Natural killer cell (primary cell): ENCODE measurements at regions of chr17 and their contacts with region 1.

Region 1: GRCh38 chr17:61412143-61412859 is 12.7 kb downstream of the TBX2 start:
- DNase-seq: peak; percentile 83 to 89
- ATAC-seq: peak; percentile 80 to 86 (median 83)
- H3K4me3 ChIP-seq: peak overlapping the region; percentile 42
- H3K4me3 Mint-ChIP-seq: peak overlapping the region; percentile 80
- H3K27ac ChIP-seq: no peak overlapping the region
- H3K27ac Mint-ChIP-seq: peak overlapping the region in 1 of 2 donors; percentile 64
- H3K4me1 ChIP-seq: peaks cover 62% of the 10 kb centered on the region
- H3K4me1 Mint-ChIP-seq: peaks cover 0 to 33% of the 10 kb centered on the region in 2 donors
- H3K27me3 ChIP-seq: peaks cover 47% of the 10 kb centered on the region
- H3K27me3 Mint-ChIP-seq: peaks cover 17 to 27% of the 10 kb centered on the region in 2 donors
- CTCF ChIP-seq: peak; percentile 98

Region 2: GRCh38 chr17:61551255-61551742 is 139.0 kb after region 1 on chr17:
- intact Hi-C with region 1: loop called (anchors 5 kb)
- DNase-seq: peak in 1 of 2 donors; percentile 33
- ATAC-seq: no peak
- H3K4me3 ChIP-seq: no peak overlapping the region
- H3K4me3 Mint-ChIP-seq: no peak overlapping the region
- H3K27ac ChIP-seq: no peak overlapping the region
- H3K27ac Mint-ChIP-seq: no peak overlapping the region
- H3K4me1 ChIP-seq: no peaks in the 10 kb centered on the region
- H3K4me1 Mint-ChIP-seq: no peaks in the 10 kb centered on the region
- H3K27me3 ChIP-seq: peaks cover 15% of the 10 kb centered on the region
- H3K27me3 Mint-ChIP-seq: peaks cover 26 to 35% of the 10 kb centered on the region in 2 donors
- CTCF ChIP-seq: no peak

Region 3: GRCh38 chr17:61583242-61583641 is 170.9 kb after region 1 on chr17:
- intact Hi-C with region 1: loop called (anchors 10 kb)
- DNase-seq: peak in 1 of 2 donors; percentile 11
- ATAC-seq: peak in 1 of 3 donors; percentile 49
- H3K4me3 ChIP-seq: no peak overlapping the region
- H3K4me3 Mint-ChIP-seq: no peak overlapping the region
- H3K27ac ChIP-seq: no peak overlapping the region
- H3K27ac Mint-ChIP-seq: no peak overlapping the region
- H3K4me1 ChIP-seq: no peaks in the 10 kb centered on the region
- H3K4me1 Mint-ChIP-seq: no peaks in the 10 kb centered on the region
- H3K27me3 ChIP-seq: peaks cover 5% of the 10 kb centered on the region
- H3K27me3 Mint-ChIP-seq: peaks cover 5 to 31% of the 10 kb centered on the region in 2 donors
- CTCF ChIP-seq: no peak

Region 4: GRCh38 chr17:61837175-61838051 is 425.1 kb after region 1 on chr17:
- intact Hi-C with region 1: loop called (anchors 1 kb)
- DNase-seq: peak; percentile 37 to 76
- ATAC-seq: peak; percentile 60 to 72 (median 68)
- H3K4me3 ChIP-seq: no peak overlapping the region
- H3K4me3 Mint-ChIP-seq: no peak overlapping the region
- H3K27ac ChIP-seq: no peak overlapping the region
- H3K27ac Mint-ChIP-seq: no peak overlapping the region
- H3K4me1 ChIP-seq: no peaks in the 10 kb centered on the region
- H3K4me1 Mint-ChIP-seq: no peaks in the 10 kb centered on the region
- H3K27me3 ChIP-seq: no peaks in the 10 kb centered on the region
- H3K27me3 Mint-ChIP-seq: no peaks in the 10 kb centered on the region
- CTCF ChIP-seq: peak; percentile 72

Region 5: DNA sequence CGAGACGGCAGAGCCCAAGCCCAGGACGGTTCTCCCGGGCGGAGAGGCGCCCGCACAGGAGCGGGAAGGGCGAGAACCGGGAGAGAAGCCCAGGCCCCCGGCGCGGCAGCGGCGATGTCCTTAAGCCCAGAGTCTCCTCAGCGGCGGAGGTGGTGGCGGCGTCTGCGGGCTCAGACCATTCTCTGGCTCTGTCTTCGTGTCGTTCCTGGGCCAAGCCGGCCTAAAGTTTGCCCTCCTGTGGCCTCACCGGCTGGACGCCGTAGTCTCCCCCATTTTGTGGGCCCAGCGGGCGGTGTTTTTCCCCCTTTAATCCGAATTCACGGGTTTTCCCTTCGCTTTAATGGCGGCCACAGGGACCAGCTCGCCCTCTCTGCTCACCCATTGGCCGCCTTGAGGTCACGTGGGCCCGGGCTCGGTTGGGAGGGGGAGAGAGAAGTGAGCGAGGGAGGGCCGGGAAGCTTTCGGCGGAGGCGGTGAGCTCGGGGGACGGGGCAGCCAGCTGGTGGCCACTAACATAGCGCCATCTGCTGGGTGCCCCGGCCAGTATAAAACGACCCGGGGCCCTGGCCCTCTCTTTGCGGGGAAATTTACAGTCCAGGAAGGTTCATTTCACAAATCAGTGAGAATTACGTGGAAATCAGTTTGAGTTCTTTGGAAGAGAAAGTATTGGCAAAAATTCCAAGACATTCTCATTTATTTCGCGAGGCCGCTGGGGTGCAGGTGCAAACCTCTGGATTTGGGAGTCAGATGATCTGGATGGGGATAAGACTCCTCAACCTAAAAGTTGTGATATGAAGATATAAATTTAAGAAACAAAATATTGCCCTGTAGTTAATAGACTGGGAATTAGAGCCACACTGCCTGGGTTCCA is 653.5 kb after region 1 on chr17:
- intact Hi-C with region 1: loop called (anchors 2 kb)
- DNase-seq: peak; percentile 97 to 99
- ATAC-seq: peak; percentile 90 to 98 (median 94)
- H3K4me3 ChIP-seq: peak overlapping the region; percentile 66
- H3K4me3 Mint-ChIP-seq: peak overlapping the region; percentile 99
- H3K27ac ChIP-seq: peak overlapping the region; percentile 90
- H3K27ac Mint-ChIP-seq: peak overlapping the region; percentile 93 to 98
- H3K4me1 ChIP-seq: peaks cover 5% of the 10 kb centered on the region
- H3K4me1 Mint-ChIP-seq: peaks cover 33 to 39% of the 10 kb centered on the region in 2 donors
- H3K27me3 ChIP-seq: no peaks in the 10 kb centered on the region
- H3K27me3 Mint-ChIP-seq: no peaks in the 10 kb centered on the region
- CTCF ChIP-seq: peak; percentile 91